MCF 10A (cell line): ENCODE measurements at regions of chr14 and their contacts with region 1.

Region 1: GRCh38 chr14:22955702-22956569 is 954 bp downstream of the HAUS4 start:
- DNase-seq: peak; percentile 3
- H3K4me3 Mint-ChIP-seq: peak overlapping the region; percentile 90
- H3K27ac Mint-ChIP-seq: peak overlapping the region; percentile 66
- H3K4me1 Mint-ChIP-seq: peaks cover 9% of the 10 kb centered on the region
- H3K27me3 Mint-ChIP-seq: no peaks in the 10 kb centered on the region
- CTCF ChIP-seq: no peak

Region 2: GRCh38 chr14:22836301-22837113 is 119.4 kb before region 1 on chr14 and contains the start of gene MMP14:
- CTCF ChIA-PET with region 1: interaction called, 3 read pairs
- POLR2A ChIA-PET with region 1: interaction called, 14 read pairs
- intact Hi-C with region 1: no loop called
- DNase-seq: peak; percentile 78
- H3K4me3 Mint-ChIP-seq: peak within 1 kb of the TSS; percentile 99
- H3K27ac Mint-ChIP-seq: peak within 1 kb of the TSS; percentile 98
- H3K4me1 Mint-ChIP-seq: peaks cover 21% of the 10 kb centered on the region
- H3K27me3 Mint-ChIP-seq: no peaks in the 10 kb centered on the region
- CTCF ChIP-seq: no peak
- total RNA-seq, gene MMP14: 71.5 and 78.6 TPM in 2 replicates

Region 3: DNA sequence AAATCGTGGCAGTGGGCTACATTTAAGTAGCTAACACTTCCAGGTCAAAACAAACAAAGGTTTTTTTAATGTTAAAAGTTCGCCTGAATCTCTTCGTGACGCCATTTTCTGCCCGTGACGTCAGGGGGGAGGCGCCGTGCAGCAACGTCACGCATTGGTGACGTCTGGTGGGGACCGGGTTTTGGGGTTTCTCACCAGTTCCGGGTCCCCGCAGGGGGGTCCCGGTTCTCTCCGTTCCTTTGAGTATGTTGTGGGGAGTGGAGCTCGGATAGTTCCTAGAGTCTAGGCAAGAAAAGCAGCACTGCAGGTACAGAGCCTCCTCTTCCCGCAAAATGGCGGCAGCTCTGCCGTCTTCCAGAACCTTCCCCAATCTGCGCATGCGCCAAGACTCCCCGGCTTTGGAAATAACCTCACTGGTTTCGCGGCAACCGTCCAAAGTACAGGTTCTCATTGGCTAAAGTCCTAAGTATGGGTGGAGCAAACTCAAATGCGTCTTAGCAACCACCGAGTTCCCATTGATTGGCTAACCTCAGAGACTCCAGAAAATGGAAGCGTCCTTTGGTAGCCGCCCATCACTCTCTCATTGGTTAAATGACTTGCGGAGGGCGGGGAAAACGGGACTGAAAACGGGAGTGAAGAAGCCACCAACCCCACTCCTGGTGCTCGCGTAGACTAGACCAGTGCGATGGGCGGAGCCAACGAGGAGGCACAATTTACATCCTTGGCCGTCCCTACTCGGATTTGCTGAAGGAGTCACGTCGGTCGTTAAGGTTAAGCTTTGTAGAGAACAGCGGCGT is 36.9 kb before region 1 on chr14 and contains the start of gene RBM23:
- CTCF ChIA-PET with region 1: no interaction called
- POLR2A ChIA-PET with region 1: interaction called, 28 read pairs
- intact Hi-C with region 1: no loop called
- DNase-seq: peak; percentile 100
- H3K4me3 Mint-ChIP-seq: peak within 1 kb of the TSS; percentile 87
- H3K27ac Mint-ChIP-seq: peak within 1 kb of the TSS; percentile 100
- H3K4me1 Mint-ChIP-seq: peaks cover 31% of the 10 kb centered on the region
- H3K27me3 Mint-ChIP-seq: no peaks in the 10 kb centered on the region
- CTCF ChIP-seq: no peak
- total RNA-seq, gene RBM23: 57.6 and 60.6 TPM in 2 replicates

Region 4: DNA sequence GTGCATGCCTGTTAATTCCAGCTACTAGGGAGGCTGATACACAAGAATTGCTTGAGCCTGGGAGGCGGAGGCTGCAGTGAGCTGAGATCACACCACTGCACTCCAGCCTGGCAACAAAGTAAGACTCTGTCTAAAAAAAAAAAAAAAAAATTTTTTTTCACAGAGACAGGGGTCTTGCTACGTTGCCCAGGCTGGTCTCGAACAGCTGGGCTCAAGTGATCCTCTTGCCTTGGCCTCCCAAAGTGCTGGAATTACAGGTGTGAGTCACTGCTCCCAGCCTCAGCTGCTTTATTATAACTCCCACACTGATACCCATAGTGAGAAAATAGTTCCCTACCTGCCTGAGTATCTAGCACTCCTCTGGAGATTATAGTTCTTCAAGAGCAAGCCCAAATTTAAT is 10.3 kb before region 1 on chr14:
- CTCF ChIA-PET with region 1: interaction called, 4 read pairs
- POLR2A ChIA-PET with region 1: interaction called, 21 read pairs
- intact Hi-C with region 1: no loop called
- DNase-seq: no peak
- H3K4me3 Mint-ChIP-seq: no peak overlapping the region
- H3K27ac Mint-ChIP-seq: no peak overlapping the region
- H3K4me1 Mint-ChIP-seq: no peaks in the 10 kb centered on the region
- H3K27me3 Mint-ChIP-seq: no peaks in the 10 kb centered on the region
- CTCF ChIP-seq: no peak

Region 5: GRCh38 chr14:22973217-22974032 is 17.5 kb after region 1 on chr14:
- CTCF ChIA-PET with region 1: interaction called, 37 read pairs
- POLR2A ChIA-PET with region 1: interaction called, 45 read pairs
- intact Hi-C with region 1: no loop called
- DNase-seq: peak; percentile 78
- H3K4me3 Mint-ChIP-seq: peak overlapping the region; percentile 50
- H3K27ac Mint-ChIP-seq: peak overlapping the region; percentile 51
- H3K4me1 Mint-ChIP-seq: peaks cover 51% of the 10 kb centered on the region
- H3K27me3 Mint-ChIP-seq: no peaks in the 10 kb centered on the region
- CTCF ChIP-seq: peak; percentile 65

Region 6: DNA sequence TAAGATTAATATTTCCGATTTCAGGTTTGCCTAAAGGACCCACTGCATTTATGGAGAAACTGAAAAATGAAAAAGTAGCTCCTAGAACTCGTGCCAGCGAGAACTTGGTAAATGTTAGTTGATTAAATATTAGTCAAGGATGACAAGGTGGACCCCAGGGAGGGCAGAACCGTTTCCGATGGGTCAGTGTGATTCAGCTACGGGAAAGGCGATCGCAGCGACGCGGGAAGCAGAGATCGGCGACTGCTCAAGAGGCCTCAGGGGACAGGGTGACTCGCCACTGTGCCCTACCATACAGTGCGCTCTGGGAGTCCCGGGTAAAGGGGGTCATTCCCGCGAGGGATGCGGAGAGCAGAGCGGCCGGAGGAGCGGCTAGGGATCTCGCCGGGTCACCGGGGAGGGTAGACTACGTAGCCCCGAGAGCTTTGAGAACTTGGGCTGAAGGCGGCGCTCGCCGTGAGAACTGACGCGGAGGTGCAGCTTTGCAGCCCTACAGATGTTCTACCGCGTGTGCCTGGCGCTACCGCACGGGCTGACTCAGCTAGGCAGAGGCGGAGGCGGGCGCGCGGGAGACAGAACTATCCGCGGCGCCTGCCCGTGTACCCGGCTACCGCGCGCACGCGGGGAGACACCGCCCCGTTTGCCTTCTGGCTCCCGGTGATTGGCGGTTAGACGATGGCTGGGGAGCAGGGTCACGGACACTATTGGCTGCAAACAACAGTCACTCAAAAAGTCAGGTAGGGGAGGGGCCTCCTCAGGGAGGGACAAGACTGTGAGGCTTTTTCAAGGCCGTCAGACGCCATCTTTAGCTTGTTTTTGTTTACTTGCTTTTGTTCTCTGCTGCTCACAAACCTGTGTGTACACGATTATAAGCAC is 50.8 kb after region 1 on chr14:
- CTCF ChIA-PET with region 1: interaction called, 5 read pairs
- POLR2A ChIA-PET with region 1: interaction called, 19 read pairs
- intact Hi-C with region 1: no loop called
- DNase-seq: peak; percentile 98
- H3K4me3 Mint-ChIP-seq: peak overlapping the region; percentile 94
- H3K27ac Mint-ChIP-seq: peak overlapping the region; percentile 99
- H3K4me1 Mint-ChIP-seq: peaks cover 38% of the 10 kb centered on the region
- H3K27me3 Mint-ChIP-seq: no peaks in the 10 kb centered on the region
- CTCF ChIP-seq: peak; percentile 15